ENCODE measurements at regions of chr12 and their contacts with region 1.

Region 1: GRCh38 chr12:101839324-101840283 is 8.8 kb upstream of the GNPTAB start:
- DNase-seq: peak; percentile 48
- ATAC-seq: peak; percentile 84
- H3K4me3 ChIP-seq: no peak overlapping the region
- H3K27ac ChIP-seq: no peak overlapping the region
- H3K4me1 ChIP-seq: peaks cover 0 to 6% of the 10 kb centered on the region in 2 experiments; a peak in 3 of 4 replicates
- H3K27me3 ChIP-seq: no peaks in the 10 kb centered on the region
- CTCF ChIP-seq: peak; percentile 67 to 89 (median 82)
- POLR2A ChIP-seq: no peak
- RAD21 ChIP-seq: peak; percentile 81

Region 2: GRCh38 chr12:101490286-101490920 is 349.2 kb before region 1 on chr12:
- CTCF ChIA-PET with region 1: no interaction called
- POLR2A ChIA-PET with region 1: no interaction called
- RAD21 ChIA-PET with region 1: no interaction called
- intact Hi-C with region 1: loop called (anchors 5 kb)
- DNase-seq: peak; percentile 62
- ATAC-seq: peak; percentile 99
- H3K4me3 ChIP-seq: no peak overlapping the region
- H3K27ac ChIP-seq: no peak overlapping the region
- H3K4me1 ChIP-seq: no peaks in the 10 kb centered on the region
- H3K27me3 ChIP-seq: no peaks in the 10 kb centered on the region
- CTCF ChIP-seq: peak; percentile 57 to 78 (median 77)
- POLR2A ChIP-seq: no peak
- RAD21 ChIP-seq: peak; percentile 81

Region 3: DNA sequence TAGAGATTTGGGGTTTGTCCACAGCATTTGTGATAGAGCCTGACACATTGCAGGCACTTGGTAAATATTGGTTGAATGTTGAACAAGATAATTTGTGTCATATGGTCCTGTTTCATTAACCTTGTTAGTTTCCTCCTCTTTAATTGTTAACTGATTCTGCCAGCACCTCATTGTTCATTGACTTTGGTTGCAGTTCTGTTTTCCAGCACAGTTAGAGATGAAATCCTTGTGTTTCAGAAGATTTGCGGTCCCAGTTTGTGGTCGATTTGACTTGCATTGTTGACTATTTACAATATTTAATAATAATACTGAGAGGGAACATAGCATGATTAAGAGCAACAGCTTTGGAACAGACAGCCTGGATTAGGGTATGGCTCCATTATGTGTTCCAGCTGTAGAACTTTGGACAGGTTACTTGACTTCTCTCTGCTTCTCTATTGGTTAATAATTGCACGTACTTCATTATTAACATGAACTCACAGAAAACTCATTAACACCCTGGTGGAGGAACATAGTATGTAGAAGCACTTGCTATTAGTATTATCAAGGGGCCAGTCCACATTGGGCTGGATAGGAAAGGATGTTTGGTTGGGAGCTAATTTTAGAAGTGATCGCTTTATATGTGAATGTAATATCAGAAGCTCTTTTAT is 46.4 kb after region 1 on chr12:
- CTCF ChIA-PET with region 1: no interaction called
- POLR2A ChIA-PET with region 1: no interaction called
- RAD21 ChIA-PET with region 1: no interaction called
- intact Hi-C with region 1: no loop called
- DNase-seq: no peak
- ATAC-seq: no peak
- H3K4me3 ChIP-seq: no peak overlapping the region
- H3K27ac ChIP-seq: no peak overlapping the region
- H3K4me1 ChIP-seq: no peaks in the 10 kb centered on the region
- H3K27me3 ChIP-seq: no peaks in the 10 kb centered on the region
- CTCF ChIP-seq: no peak
- POLR2A ChIP-seq: no peak
- RAD21 ChIP-seq: no peak